ENCODE measurements at regions of chr15 and their contacts with region 1.

Region 1: GRCh38 chr15:60916679-60917460 is 312.2 kb downstream of the RORA start:
- DNase-seq: peak; percentile 74
- CTCF ChIP-seq: peak; percentile 76

Region 2: GRCh38 chr15:60507596-60508424 is 409.1 kb before region 1 on chr15:
- CTCF ChIA-PET with region 1: interaction called, 20 read pairs
- POLR2A ChIA-PET with region 1: no interaction called
- DNase-seq: peak; percentile 72
- CTCF ChIP-seq: peak; percentile 83

Region 3: GRCh38 chr15:60592371-60593169 is 324.3 kb before region 1 on chr15:
- CTCF ChIA-PET with region 1: interaction called, 103 read pairs
- POLR2A ChIA-PET with region 1: no interaction called
- DNase-seq: peak; percentile 77
- CTCF ChIP-seq: peak; percentile 23

Region 4: DNA sequence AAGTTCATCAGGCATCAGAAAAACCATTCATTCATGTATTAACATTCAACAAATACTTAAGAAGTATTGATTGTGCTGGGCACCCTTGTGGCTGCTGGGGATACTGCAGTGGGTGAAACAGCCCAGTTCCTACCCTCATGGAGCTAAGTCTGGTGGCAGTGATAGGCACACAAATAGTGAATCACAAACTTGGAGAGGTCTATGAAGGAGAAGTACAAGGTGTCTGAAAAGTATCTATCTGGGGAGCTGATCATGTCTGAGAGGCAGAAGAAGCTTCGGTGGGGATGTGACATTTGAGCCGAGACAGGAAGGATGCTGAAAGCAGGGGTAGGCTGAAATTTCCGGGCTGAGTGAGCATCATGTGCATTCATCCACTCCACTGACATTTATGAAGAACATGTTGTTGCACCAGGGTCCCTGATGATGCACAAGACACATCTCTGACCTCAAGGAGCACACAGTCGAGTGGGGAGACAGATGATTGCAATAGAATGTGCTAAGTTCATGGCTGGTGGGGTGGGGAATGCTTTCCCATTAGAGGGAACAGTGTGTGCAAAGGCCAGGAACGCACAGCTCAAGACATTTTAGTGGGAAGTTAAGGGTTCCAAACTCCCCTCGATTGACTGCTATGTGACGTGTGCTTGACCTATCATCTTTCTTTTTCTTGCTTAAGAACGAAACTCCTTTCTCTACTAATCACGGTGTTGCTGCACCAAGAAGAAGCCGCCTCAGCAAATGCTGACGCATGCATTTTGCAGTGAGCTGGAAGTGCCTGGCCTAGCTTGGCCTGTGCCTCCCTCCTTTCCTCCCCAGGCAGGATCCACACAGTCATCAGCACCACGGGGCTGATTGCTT is 128.8 kb before region 1 on chr15:
- CTCF ChIA-PET with region 1: interaction called, 10 read pairs
- POLR2A ChIA-PET with region 1: no interaction called
- DNase-seq: no peak
- CTCF ChIP-seq: peak; percentile 26

Region 5: GRCh38 chr15:60899322-60899966 is 17.4 kb before region 1 on chr15:
- CTCF ChIA-PET with region 1: interaction called, 53 read pairs
- POLR2A ChIA-PET with region 1: no interaction called
- DNase-seq: peak; percentile 40
- CTCF ChIP-seq: no peak

Region 6: DNA sequence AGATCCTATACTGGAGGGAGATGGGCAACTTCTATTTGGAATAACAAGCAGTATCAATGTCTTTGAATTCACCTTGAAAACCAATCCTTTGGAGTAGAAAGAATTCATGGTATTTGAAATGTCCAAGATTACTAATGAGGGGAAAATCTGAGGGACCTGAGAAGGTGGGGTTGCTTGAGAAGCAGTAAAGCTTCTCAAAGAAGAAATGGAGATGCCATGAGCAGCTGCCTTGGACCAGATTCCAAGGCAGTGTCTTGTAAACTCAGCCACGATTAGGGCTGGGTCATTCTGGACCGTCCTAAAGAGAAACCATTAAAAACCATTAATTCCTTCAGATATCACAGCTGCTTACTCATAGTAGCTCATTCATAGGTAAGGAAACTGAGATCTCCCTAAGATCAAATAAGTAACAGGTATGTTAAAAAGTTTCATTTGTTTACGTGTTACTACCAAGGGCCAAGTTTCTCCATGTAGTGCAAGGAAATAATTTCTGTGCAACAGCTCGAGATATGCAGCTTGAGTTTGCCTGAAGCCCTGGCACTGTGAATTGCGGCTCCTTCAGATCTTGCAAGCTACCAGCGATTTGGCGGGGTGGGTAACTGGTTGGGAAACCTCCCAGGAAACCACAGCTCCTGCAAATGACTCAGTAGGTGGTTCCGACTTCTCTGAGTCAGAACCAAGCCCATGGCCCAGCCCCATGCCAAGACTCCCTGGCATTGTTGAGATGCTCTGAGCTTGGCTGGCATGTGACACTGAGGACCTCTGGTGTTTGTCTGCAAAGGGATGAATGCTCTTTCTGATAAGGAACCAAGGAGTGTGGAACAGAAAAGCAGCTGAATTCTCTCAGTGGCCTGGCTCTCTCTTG is 15.4 kb after region 1 on chr15:
- CTCF ChIA-PET with region 1: interaction called, 40 read pairs
- POLR2A ChIA-PET with region 1: interaction called, 3 read pairs
- DNase-seq: no peak
- CTCF ChIP-seq: peak; percentile 31

Measured in GM10248 (cell line).